PC-3 (cell line): ENCODE measurements at regions of chr1 and their contacts with region 1.

Region 1: DNA sequence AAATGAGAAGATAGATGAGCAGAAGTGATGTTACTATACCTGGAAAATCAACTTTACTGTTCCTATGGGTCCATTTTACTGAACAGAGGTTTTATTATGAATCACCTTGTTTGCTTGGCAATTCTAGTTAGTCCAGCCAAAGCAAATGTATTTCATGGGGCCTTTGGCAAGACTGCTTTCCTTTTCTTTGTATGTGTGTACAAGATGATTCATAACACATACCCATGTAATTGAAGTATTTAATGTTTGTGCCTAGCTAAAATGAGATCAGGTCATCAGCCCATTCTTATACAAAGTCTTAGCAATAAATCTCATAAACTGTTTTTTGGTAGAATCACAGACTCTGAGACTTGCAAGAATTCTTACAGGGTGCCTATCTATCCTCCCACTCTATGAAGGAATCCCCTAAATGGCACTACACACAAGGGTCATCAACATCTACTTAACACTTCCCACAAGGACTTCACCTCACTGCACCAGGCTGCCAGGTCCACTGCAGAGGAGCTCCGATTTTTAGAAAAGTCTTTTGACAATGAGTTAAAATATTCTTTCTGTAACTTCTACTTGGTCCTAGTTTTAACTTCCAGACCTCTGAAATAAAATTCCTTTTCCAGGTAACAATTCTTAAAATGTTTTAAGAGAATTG is 58.5 kb downstream of the LPAR3 start:
- DNase-seq: peak; percentile 95
- ATAC-seq: peak; percentile 64
- H3K4me3 ChIP-seq: peak overlapping the region; percentile 14; the same call in 1 of the 2 replicates
- H3K27ac ChIP-seq: peak overlapping the region; percentile 97
- H3K4me1 ChIP-seq: peaks cover 54% of the 10 kb centered on the region
- H3K27me3 ChIP-seq: no peaks in the 10 kb centered on the region
- CTCF ChIP-seq: no peak

Region 2: DNA sequence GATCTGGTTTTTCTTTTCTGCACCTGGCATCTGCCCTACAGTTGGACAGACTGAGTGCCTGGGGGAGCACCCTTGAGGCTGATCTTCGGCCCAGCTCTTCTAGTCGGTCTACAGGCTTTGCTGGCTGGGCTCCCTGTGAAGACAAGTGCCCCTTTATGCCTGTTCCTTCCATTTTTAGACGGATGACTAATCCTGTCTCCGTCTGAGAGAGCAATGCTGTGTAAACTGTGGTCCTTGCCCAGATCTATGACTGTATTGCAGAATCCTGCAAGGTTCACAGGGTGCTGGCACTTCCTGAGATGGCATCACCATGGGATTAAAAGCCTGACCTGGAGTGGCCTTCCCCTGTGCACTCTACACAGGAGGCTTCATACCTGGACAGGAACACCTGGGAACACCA is 580.7 kb before region 1 on chr1:
- CTCF ChIA-PET with region 1: no interaction called
- POLR2A ChIA-PET with region 1: no interaction called
- intact Hi-C with region 1: loop called (anchors 1 kb)
- DNase-seq: peak; percentile 98
- ATAC-seq: peak; percentile 99
- H3K4me3 ChIP-seq: no peak overlapping the region
- H3K27ac ChIP-seq: peak overlapping the region; percentile 94
- H3K4me1 ChIP-seq: peaks cover 37% of the 10 kb centered on the region
- H3K27me3 ChIP-seq: no peaks in the 10 kb centered on the region
- CTCF ChIP-seq: no peak

Region 3: DNA sequence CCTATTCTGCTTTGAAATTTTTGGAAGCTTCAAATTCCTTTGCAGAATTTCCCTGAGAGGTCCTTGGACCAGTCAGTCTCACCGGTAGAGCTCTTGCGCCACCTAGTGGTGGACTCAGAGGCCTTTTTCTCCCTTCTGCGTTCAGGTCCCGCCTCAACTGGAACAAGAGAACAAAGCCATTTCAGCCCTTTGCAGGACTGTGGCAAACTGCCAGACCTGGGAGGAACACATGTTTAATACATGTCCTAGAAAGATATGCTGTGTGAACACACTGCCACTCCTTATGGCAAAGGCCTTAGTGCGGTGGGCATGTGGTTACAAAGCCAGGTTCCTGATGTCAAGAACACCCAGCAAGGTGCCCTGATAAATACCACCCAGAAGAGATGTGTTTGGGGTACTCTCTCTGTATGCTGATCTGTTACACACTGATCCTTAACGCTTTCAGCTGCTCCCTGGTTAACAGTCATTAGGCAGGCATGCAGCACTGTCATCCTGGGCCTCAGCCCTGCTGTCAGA is 62.1 kb before region 1 on chr1:
- CTCF ChIA-PET with region 1: interaction called, 10 read pairs
- POLR2A ChIA-PET with region 1: no interaction called
- intact Hi-C with region 1: loop called (anchors 1 kb)
- DNase-seq: peak; percentile 92
- ATAC-seq: peak; percentile 31
- H3K4me3 ChIP-seq: no peak overlapping the region
- H3K27ac ChIP-seq: peak overlapping the region; percentile 99
- H3K4me1 ChIP-seq: peaks cover 49% of the 10 kb centered on the region
- H3K27me3 ChIP-seq: no peaks in the 10 kb centered on the region
- CTCF ChIP-seq: peak; percentile 93

Region 4: GRCh38 chr1:84847253-84848250 is 13.0 kb after region 1 on chr1:
- CTCF ChIA-PET with region 1: no interaction called
- POLR2A ChIA-PET with region 1: no interaction called
- intact Hi-C with region 1: loop called (anchors 1 kb)
- DNase-seq: peak; percentile 98
- ATAC-seq: peak; percentile 77
- H3K4me3 ChIP-seq: no peak overlapping the region
- H3K27ac ChIP-seq: peak overlapping the region; percentile 91
- H3K4me1 ChIP-seq: peaks cover 49% of the 10 kb centered on the region
- H3K27me3 ChIP-seq: no peaks in the 10 kb centered on the region
- CTCF ChIP-seq: no peak

Region 5: GRCh38 chr1:84872696-84873355 is 38.3 kb after region 1 on chr1:
- CTCF ChIA-PET with region 1: interaction called, 3 read pairs
- POLR2A ChIA-PET with region 1: no interaction called
- intact Hi-C with region 1: loop called (anchors 1 kb)
- DNase-seq: no peak
- ATAC-seq: peak; percentile 44; the same call in 1 of the 2 replicates
- H3K4me3 ChIP-seq: no peak overlapping the region
- H3K27ac ChIP-seq: no peak overlapping the region
- H3K4me1 ChIP-seq: peaks cover 5% of the 10 kb centered on the region; the same call in 1 of the 2 replicates
- H3K27me3 ChIP-seq: no peaks in the 10 kb centered on the region
- CTCF ChIP-seq: no peak